ENCODE measurements at regions of chr18 and their contacts with region 1.

Region 1: GRCh38 chr18:59823596-59824195 is 76.1 kb upstream of the PMAIP1 start:
- DNase-seq: peak; percentile 68
- H3K4me3 ChIP-seq: no peak overlapping the region
- H3K27ac ChIP-seq: no peak overlapping the region
- H3K27me3 ChIP-seq: no peaks in the 10 kb centered on the region
- CTCF ChIP-seq: peak; percentile 92

Region 2: DNA sequence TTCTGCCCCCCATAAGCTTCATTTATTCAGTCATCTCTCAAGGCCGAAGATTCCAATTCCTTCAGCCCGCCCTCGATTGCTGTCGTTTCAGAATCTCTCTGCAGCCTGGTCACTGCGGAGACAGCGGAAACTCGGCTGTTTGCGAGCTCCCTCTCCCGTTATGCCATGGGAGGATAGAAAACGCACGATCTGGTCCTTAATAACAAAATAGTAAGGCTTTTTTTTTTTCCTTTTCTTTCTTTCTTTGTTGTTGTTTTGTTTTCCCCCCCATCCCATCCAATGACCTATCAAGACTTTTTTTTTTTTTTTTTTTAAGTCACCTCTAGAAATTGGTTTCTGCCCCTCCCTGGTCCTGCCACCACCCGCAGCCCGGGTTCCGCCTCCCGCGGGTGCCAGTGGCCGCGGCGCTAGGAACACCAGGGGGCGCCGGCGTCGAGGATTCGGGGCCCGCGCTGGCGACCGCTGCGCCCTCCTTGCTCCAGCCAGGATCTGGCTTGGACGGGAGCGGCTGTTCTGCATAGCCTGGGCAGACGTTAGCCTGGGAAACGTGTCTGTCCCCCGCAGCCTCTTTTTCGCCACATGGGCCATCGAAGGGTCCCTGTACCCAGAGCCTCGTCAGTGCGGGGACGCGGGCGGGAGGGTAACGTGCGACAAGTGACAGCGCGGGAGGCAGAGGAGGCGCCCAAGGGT is 515.3 kb before region 1 on chr18:
- CTCF ChIA-PET with region 1: interaction called, 30 read pairs
- POLR2A ChIA-PET with region 1: no interaction called
- DNase-seq: peak; percentile 4
- H3K4me3 ChIP-seq: peak overlapping the region; percentile 45
- H3K27ac ChIP-seq: no peak overlapping the region
- H3K27me3 ChIP-seq: peaks cover 54% of the 10 kb centered on the region
- CTCF ChIP-seq: peak; percentile 86

Region 3: DNA sequence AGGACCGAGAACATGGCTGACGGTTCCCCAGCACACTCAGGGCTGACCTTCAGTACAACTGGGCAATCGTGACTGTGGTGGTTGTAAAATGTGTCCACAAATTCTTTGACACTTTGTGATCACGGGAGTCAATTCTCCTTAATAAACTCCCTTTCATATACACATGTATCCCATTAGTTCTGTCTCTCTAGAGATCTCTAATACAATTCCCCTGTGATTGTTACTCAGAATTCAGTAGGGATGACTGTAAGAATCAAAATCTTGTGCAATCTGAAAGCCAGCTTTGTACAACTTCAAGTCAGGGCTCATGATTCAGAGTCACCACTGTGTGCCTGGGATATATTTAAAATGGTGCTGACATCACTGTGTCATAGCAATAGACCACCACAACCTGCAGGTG is 375.1 kb before region 1 on chr18:
- CTCF ChIA-PET with region 1: interaction called, 17 read pairs
- POLR2A ChIA-PET with region 1: no interaction called
- DNase-seq: no peak
- H3K4me3 ChIP-seq: no peak overlapping the region
- H3K27ac ChIP-seq: no peak overlapping the region
- H3K27me3 ChIP-seq: no peaks in the 10 kb centered on the region
- CTCF ChIP-seq: no peak

Region 4: DNA sequence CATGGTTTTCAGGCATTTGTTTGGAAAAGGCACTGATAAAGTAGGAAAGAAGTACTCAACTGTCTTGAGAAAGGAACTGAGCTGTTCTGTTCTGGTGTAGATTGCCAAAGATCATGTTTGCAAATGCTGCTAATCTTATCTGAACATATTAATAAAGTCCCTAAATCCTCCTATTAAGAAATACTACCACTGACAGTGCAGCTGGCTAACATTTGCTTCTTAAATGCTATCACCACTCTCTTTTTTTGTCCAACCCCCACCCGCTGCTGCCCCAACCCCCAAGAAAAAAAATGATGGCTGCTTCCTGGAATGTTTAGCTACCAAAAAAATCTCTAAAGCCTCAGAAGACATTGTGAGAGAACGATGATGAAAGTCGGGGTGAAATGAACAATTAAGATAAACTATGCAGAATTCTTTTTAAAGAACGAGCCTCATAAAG is 257.1 kb before region 1 on chr18:
- CTCF ChIA-PET with region 1: interaction called, 10 read pairs
- POLR2A ChIA-PET with region 1: no interaction called
- DNase-seq: peak; percentile 58
- H3K4me3 ChIP-seq: no peak overlapping the region
- H3K27ac ChIP-seq: no peak overlapping the region
- H3K27me3 ChIP-seq: no peaks in the 10 kb centered on the region
- CTCF ChIP-seq: no peak

Region 5: DNA sequence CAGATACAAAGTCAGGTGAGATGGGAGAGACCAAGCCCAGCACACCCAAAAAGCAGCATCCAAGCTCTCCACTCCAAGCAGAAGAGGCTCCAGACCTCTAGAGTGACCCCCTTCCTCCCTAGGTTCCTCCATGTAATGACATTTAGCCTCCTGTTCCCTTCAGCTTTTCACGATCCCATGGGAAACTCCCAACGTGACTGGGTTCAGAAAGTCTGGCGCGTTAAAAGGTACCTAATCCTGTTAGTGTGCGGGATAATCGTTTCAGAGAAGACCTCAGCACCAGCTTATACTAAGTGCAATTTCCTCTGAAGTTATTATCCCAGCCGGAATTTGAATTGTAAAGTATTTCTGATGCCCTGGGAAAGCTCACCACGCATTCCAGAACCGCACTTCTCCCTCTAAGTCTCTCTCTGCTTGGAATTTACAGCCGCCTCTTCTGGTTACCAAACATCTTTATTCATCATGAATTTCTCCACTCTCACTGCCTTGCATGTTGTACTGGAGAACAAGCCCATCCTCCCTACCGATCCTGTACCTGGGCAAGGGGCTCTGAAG is 173.4 kb before region 1 on chr18:
- CTCF ChIA-PET with region 1: interaction called, 13 read pairs
- POLR2A ChIA-PET with region 1: no interaction called
- DNase-seq: no peak
- H3K4me3 ChIP-seq: no peak overlapping the region
- H3K27ac ChIP-seq: no peak overlapping the region
- H3K27me3 ChIP-seq: no peaks in the 10 kb centered on the region
- CTCF ChIP-seq: no peak

Region 6: GRCh38 chr18:59705145-59705544 is 118.6 kb before region 1 on chr18:
- CTCF ChIA-PET with region 1: interaction called, 11 read pairs
- POLR2A ChIA-PET with region 1: no interaction called
- DNase-seq: peak; percentile 49
- H3K4me3 ChIP-seq: no peak overlapping the region
- H3K27ac ChIP-seq: no peak overlapping the region
- H3K27me3 ChIP-seq: no peaks in the 10 kb centered on the region
- CTCF ChIP-seq: no peak

Region 7: DNA sequence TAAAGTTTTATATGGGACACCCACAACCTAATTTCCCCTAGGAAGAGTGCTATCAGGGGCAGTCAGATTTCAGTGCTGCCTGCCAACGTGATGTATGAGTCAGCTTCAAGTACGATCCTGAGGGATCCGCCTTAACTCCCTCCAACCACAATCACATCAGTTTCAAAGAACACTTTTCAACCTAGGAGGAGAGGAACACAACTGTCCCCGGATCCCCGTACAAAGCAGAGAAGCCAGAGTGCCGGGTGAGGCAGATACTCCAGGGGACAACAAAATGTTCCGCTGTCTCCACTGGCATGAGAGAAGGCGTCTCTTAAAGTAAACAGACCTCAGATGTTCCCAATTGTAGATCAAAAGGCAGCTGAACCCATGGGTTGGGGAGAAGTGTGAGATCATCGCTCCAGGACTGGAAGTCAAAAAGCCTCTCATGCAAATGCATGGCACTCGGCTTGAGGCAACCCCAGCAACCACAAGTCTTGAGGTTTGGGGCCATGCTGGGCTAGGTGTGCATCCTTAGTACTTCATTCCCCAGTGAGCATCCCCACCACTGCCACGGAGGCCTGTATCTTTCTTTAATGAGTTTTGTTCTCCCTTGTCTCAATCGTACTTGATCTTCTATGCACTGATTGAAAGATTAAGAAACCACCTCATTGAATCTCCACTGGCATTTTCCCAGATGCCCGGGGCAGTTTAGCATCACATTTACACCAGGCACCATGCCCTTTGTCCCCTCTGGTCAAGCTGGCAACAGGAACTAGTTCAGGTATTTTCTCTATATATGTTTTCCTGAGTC is 35.5 kb before region 1 on chr18:
- CTCF ChIA-PET with region 1: interaction called, 34 read pairs
- POLR2A ChIA-PET with region 1: interaction called, 3 read pairs
- DNase-seq: no peak
- H3K4me3 ChIP-seq: peak overlapping the region; percentile 33
- H3K27ac ChIP-seq: peak overlapping the region; percentile 79
- H3K27me3 ChIP-seq: no peaks in the 10 kb centered on the region
- CTCF ChIP-seq: no peak

Measured in AG04450 (cell line).